ENCODE measurements at regions of chr2 and their contacts with region 1.

Region 1: GRCh38 chr2:97740590-97741182 is 27.3 kb downstream of the ZAP70 start:
- H3K4me3 ChIP-seq: no peak overlapping the region
- H3K27ac ChIP-seq: no peak overlapping the region
- H3K4me1 ChIP-seq: no peaks in the 10 kb centered on the region
- CTCF ChIP-seq: peak; percentile 65

Region 2: DNA sequence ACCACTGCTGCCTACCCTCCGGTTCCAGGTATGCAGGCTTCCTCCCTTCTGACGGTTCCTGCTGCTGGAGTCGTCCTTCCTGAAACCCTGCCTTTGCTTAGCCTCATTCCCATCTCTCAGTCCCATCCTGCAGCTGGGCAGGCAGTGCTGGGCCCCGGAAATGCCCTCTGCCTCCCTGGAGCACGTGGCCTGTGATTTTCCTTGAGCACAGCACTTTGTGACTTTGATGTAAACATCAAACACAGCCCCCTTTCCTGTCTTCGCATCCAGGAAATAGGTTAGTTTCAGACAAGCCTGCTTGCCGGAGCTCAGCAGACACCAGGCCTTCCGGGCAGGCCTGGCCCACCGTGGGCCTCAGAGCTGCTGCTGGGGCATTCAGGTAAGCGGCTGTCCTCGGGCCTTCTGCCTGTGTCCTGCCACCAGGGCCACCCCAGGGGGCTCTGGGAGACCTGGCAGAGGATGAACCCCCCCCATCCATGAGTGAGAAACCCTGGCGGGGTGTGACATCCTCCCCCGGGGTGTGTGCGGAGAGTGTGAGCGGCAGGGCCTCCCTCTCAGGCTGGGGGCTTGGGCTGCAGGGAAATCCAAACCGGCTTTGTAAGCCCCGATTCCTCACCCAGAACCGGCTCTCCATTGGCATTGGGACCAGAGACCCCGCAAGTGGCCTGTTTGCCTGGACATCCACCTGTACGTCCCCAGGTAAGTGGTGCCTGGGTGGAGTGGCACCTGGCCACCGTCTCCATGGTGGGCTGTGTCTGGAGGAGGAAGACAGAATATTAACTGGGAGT is 27.2 kb before region 1 on chr2 and contains the start of gene ZAP70:
- CTCF ChIA-PET with region 1: interaction called, 13 read pairs
- POLR2A ChIA-PET with region 1: no interaction called
- H3K4me3 ChIP-seq: no peak within 1 kb of the TSS
- H3K27ac ChIP-seq: no peak within 1 kb of the TSS
- H3K4me1 ChIP-seq: no peaks in the 10 kb centered on the region
- CTCF ChIP-seq: no peak

Region 3: DNA sequence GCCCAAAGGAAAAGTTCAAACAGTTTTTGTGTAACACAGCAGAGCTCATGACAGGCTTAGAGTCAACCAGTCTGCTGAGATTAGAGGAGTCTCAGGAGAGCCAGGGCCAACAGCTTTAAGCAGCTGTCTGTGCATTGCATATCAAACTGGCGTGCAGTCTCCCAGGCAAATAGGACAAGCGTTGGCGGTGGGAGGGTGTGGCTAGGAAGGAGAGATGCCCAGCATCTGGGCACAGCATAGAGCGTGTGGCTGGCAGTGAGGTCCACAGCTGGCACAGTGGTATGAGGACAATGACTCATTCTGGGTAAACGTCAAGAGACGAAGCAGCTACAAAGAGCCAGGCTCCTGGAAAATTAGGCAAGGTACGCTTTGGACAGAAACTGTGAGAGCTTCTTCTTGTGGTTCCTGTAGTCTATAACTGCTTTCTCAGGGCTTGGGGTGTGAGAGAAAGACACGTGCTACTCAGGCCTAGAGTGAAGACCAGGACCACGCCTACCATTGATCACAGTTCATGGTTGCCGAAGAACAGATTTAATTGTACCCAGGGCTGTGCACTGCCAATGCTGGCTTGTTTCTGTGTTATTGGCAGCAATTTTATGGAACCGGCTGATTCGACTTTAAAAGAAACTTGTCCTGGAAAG is 12.5 kb before region 1 on chr2:
- CTCF ChIA-PET with region 1: interaction called, 20 read pairs
- POLR2A ChIA-PET with region 1: no interaction called
- H3K4me3 ChIP-seq: no peak overlapping the region
- H3K27ac ChIP-seq: no peak overlapping the region
- H3K4me1 ChIP-seq: no peaks in the 10 kb centered on the region
- CTCF ChIP-seq: no peak

Region 4: DNA sequence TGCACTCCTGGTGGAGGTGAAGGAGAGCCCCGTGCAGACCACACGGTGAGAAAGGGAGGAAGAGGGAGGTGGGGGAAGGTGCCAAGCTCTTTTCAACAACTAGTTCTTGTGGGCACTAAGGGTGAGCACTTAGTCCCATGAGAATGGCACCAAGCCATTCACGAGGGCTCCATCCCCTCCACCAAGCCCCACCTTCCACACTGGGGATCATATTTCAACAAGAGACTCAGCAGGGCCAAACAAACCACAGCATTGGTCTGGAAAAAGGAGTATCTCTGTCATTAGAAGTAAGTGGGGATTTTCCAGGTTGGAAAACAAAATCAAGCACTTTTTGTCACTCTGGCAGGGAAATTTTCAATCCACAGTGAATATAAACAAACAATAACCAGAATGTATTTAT is 11.1 kb after region 1 on chr2:
- CTCF ChIA-PET with region 1: interaction called, 23 read pairs
- POLR2A ChIA-PET with region 1: no interaction called
- H3K4me3 ChIP-seq: no peak overlapping the region
- H3K27ac ChIP-seq: no peak overlapping the region
- H3K4me1 ChIP-seq: 0 out of 2 replicates have a peak, but pooled peaks cover 5% of the 10 kb centered on the region
- CTCF ChIP-seq: no peak

Region 5: GRCh38 chr2:98188351-98189049 is 447.8 kb after region 1 on chr2:
- CTCF ChIA-PET with region 1: no interaction called
- POLR2A ChIA-PET with region 1: no interaction called
- H3K4me3 ChIP-seq: no peak overlapping the region
- H3K27ac ChIP-seq: no peak overlapping the region
- H3K4me1 ChIP-seq: no peaks in the 10 kb centered on the region
- CTCF ChIP-seq: no peak

Measured in HEK293 (cell line).